Tibial artery (tissue), 4 donors: ENCODE measurements at regions of chr19 and their contacts with region 1.

Region 1: DNA sequence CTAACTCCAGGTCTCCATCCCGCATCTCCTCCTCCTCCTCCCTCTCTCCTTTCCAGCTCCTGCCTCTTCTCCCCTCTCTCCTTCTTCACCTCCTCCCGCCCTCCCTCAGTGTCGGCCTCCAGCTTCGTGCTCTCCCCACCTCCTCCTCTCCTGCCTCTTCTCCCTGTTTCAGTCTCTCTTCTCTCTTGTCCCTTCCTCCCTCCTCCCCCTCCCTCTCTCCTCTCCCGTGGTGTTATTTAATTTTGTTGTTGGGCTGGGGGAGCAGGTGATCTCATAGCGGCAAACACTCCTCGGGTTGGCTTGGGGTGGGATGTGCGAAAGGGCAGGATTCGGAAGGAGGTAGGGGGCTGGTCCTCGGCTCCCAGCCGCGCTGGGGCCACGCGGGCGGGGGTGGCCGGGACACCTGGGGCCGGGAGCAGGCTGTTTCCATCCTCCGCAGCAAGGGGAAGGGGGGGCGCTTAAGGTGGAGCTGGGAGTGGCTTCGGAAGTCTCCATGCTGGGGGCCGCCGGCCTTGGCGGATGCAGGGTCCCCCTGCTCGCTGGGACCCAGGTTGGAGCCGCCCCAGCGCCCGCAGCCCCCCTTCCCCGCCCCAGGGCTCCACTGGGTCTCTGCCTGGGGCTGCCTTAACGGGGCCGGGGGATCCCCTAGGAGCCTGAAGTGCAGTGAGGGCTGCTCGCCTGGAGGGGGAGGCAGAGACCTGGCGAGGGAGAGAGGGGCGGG is at the start of gene CA11:
- DNase-seq: peak; percentile 84 to 94
- H3K4me3 ChIP-seq: peak within 1 kb of the TSS; percentile 57 to 64
- H3K27ac ChIP-seq: peak within 1 kb of the TSS; percentile 86 to 88
- H3K4me1 ChIP-seq: peaks cover 7 to 19% (median 14%) of the 10 kb centered on the region in 4 donors
- H3K27me3 ChIP-seq: no peaks in the 10 kb centered on the region
- CTCF ChIP-seq: peak; percentile 82 to 94

Region 2: DNA sequence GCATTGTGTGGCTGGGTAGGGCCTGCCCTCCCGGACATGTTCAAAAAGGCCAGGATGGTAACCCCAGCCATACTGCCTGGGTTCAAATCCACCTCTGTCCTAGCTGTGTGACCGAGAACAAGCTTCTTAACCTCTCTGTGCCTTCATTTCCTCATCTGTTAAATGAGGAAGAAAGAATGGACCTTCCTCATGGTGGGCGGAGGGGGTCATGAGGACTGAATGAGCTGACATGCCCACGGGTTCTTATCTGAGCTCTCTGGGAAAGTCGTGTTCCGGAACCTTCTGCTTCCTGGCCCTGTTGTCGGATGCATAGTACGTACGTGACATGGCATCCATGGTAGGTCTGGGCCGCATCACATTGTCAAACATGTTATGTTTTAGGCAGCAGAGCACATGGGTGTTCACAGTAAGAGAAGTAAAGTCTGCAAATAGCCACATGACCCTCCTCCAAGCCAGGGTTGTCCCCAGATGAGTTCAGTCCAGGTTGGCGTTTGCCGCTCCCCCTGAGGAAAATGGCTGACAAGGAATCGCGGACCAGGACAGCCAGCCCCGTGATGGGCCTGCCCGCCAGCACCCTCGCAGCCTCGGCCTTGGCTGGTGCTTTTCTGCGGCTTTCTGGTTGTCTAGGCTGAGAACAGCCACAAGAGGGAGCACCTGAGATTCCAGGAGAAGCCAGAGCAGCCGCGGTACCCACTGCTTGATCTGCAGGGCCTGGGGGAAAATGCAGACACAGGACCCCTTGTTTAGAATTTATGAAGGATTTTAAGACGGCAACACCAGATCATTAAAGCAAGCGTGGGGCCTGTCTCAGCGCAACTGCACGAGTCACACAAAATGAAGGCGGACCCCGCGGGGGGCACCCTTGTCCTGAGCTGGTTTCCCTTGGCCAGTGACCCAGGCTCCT is 29.0 kb after region 1 on chr19:
- intact Hi-C with region 1: loop called (anchors 2 kb)
- DNase-seq: peak; percentile 82 to 88
- H3K4me3 ChIP-seq: no peak overlapping the region
- H3K27ac ChIP-seq: no peak overlapping the region
- H3K4me1 ChIP-seq: peaks cover 0 to 9% (median 3%) of the 10 kb centered on the region in 4 donors
- H3K27me3 ChIP-seq: no peaks in the 10 kb centered on the region
- CTCF ChIP-seq: peak; percentile 81 to 82

Region 3: GRCh38 chr19:48698046-48698445 is 51.9 kb after region 1 on chr19:
- intact Hi-C with region 1: no loop called
- DNase-seq: no peak
- H3K4me3 ChIP-seq: no peak overlapping the region
- H3K27ac ChIP-seq: no peak overlapping the region
- H3K4me1 ChIP-seq: peaks cover 0 to 10% (median 2%) of the 10 kb centered on the region in 4 donors
- H3K27me3 ChIP-seq: peaks cover 0 to 28% of the 10 kb centered on the region in 2 donors
- CTCF ChIP-seq: no peak

Region 4: GRCh38 chr19:48835734-48836088 is 189.6 kb after region 1 on chr19:
- intact Hi-C with region 1: loop called (anchors 10 kb)
- DNase-seq: peak; percentile 97 to 98
- H3K4me3 ChIP-seq: peak overlapping the region; percentile 44 to 59
- H3K27ac ChIP-seq: peak overlapping the region; percentile 83 to 85
- H3K4me1 ChIP-seq: peaks cover 0 to 24% (median 13%) of the 10 kb centered on the region in 4 donors
- H3K27me3 ChIP-seq: no peaks in the 10 kb centered on the region
- CTCF ChIP-seq: peak; percentile 88 to 98

Region 5: GRCh38 chr19:48993175-48994034 is 347.2 kb after region 1 on chr19 and contains the starts of genes GYS1 and RUVBL2:
- intact Hi-C with region 1: loop called (anchors 10 kb)
- DNase-seq: peak; percentile 100
- H3K4me3 ChIP-seq: peak within 1 kb of the TSS; percentile 85 to 97
- H3K27ac ChIP-seq: peak within 1 kb of the TSS; percentile 98 to 99
- H3K4me1 ChIP-seq: peaks cover 0 to 44% (median 33%) of the 10 kb centered on the region in 4 donors
- H3K27me3 ChIP-seq: no peaks in the 10 kb centered on the region
- CTCF ChIP-seq: peak; percentile 99 to 100